CD4-positive, alpha-beta T cell (primary cell): ENCODE measurements at regions of chr1 and their contacts with region 1.

Region 1: DNA sequence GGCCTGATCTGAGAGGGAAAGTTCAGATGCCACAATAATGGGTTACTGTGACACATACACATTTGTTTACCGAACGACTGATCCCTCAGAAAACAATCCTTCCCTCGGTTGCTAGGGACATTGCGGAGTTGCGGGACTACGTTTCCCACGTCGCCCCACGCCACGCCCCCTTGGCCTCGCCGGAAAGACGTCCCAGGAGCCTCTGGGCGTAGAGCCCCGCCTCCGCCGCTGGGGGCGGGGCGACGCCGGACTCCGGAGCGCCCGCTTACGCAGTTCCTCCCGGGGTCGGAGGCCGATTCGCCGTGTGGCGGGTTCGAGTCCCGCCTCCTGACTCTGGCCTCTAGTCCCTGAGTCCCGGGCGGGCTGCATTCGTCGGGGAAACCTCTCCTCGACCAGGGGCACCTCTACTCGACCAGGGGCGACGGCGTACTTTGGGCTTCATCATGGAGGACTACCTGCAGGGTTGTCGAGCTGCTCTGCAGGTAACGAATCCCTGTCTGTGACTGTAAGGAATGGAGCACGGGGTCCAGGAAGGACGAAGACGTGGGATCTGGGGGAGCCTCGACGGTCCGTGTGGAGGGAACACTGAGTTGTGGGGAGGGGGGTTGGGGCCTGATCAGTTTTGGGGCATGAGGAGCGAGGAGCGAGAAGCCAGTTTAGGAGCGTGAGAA is at the start of gene PRUNE1:
- DNase-seq: peak; percentile 92 to 100 (median 96)
- ATAC-seq: peak; percentile 85
- H3K4me3 ChIP-seq: peak within 1 kb of the TSS; percentile 82
- H3K4me3 Mint-ChIP-seq: peak within 1 kb of the TSS; percentile 93
- H3K27ac ChIP-seq: peak within 1 kb of the TSS; percentile 87 to 98
- H3K27ac Mint-ChIP-seq: peak within 1 kb of the TSS; percentile 98
- H3K4me1 ChIP-seq: peaks cover 83% of the 10 kb centered on the region
- H3K4me1 Mint-ChIP-seq: peaks cover 86% of the 10 kb centered on the region
- H3K27me3 ChIP-seq: no peaks in the 10 kb centered on the region
- H3K27me3 Mint-ChIP-seq: no peaks in the 10 kb centered on the region
- CTCF ChIP-seq: no peak
- total RNA-seq, gene PRUNE1: 10.9 to 12.1 TPM

Region 2: DNA sequence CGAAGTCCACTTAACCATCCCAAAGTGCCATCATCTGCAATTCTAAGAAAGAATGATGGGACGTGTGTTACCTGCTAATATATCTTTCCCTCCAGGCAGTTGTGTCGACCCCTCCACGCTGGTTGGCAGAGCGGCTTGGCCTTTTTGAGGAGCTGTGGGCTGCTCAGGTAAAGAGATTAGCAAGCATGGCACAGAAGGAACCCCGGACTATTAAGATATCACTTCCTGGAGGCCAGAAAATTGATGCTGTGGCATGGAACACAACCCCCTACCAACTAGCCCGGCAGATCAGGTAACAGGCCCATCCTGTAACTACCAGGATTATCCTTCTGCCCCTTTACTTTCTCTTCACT is 520.6 kb before region 1 on chr1:
- CTCF ChIA-PET with region 1: no interaction called
- POLR2A ChIA-PET with region 1: no interaction called
- intact Hi-C with region 1: no loop called
- DNase-seq: peak in 2 of 14 experiments; percentile 1 to 6
- ATAC-seq: no peak
- H3K4me3 ChIP-seq: peak overlapping the region; percentile 67
- H3K4me3 Mint-ChIP-seq: peak overlapping the region; percentile 98
- H3K27ac ChIP-seq: peak overlapping the region; percentile 53 to 59
- H3K27ac Mint-ChIP-seq: peak overlapping the region; percentile 84
- H3K4me1 ChIP-seq: peaks cover 16% of the 10 kb centered on the region
- H3K4me1 Mint-ChIP-seq: peaks cover 20% of the 10 kb centered on the region
- H3K27me3 ChIP-seq: no peaks in the 10 kb centered on the region
- H3K27me3 Mint-ChIP-seq: no peaks in the 10 kb centered on the region
- CTCF ChIP-seq: no peak

Region 3: GRCh38 chr1:150876119-150876454 is 132.2 kb before region 1 on chr1:
- CTCF ChIA-PET with region 1: interaction called, 5 read pairs
- POLR2A ChIA-PET with region 1: no interaction called
- intact Hi-C with region 1: loop called in 1 of 2 experiments (anchors 5 kb)
- DNase-seq: no peak
- ATAC-seq: no peak
- H3K4me3 ChIP-seq: peak overlapping the region; percentile 79
- H3K4me3 Mint-ChIP-seq: peak overlapping the region; percentile 98
- H3K27ac ChIP-seq: peak overlapping the region; percentile 68 to 86
- H3K27ac Mint-ChIP-seq: peak overlapping the region; percentile 92
- H3K4me1 ChIP-seq: peaks cover 15% of the 10 kb centered on the region
- H3K4me1 Mint-ChIP-seq: peaks cover 43% of the 10 kb centered on the region
- H3K27me3 ChIP-seq: no peaks in the 10 kb centered on the region
- H3K27me3 Mint-ChIP-seq: no peaks in the 10 kb centered on the region
- CTCF ChIP-seq: no peak

Region 4: GRCh38 chr1:150979092-150980056 is 29.0 kb before region 1 on chr1:
- CTCF ChIA-PET with region 1: interaction called, 9 read pairs
- POLR2A ChIA-PET with region 1: interaction called, 11 read pairs
- intact Hi-C with region 1: loop called in 1 of 2 experiments (anchors 1 kb)
- DNase-seq: peak; percentile 81 to 94 (median 88)
- ATAC-seq: peak; percentile 55
- H3K4me3 ChIP-seq: peak overlapping the region; percentile 41
- H3K4me3 Mint-ChIP-seq: peak overlapping the region; percentile 75
- H3K27ac ChIP-seq: no peak overlapping the region
- H3K27ac Mint-ChIP-seq: peak overlapping the region; percentile 59
- H3K4me1 ChIP-seq: peaks cover 45% of the 10 kb centered on the region
- H3K4me1 Mint-ChIP-seq: peaks cover 40% of the 10 kb centered on the region
- H3K27me3 ChIP-seq: no peaks in the 10 kb centered on the region
- H3K27me3 Mint-ChIP-seq: no peaks in the 10 kb centered on the region
- CTCF ChIP-seq: peak; percentile 100

Region 5: GRCh38 chr1:150995896-150996295 is 12.4 kb before region 1 on chr1:
- CTCF ChIA-PET with region 1: interaction called, 29 read pairs
- POLR2A ChIA-PET with region 1: interaction called, 7 read pairs
- intact Hi-C with region 1: no loop called
- DNase-seq: peak in 6 of 14 experiments; percentile 15 to 65 (median 42)
- ATAC-seq: peak; percentile 60
- H3K4me3 ChIP-seq: no peak overlapping the region
- H3K4me3 Mint-ChIP-seq: no peak overlapping the region
- H3K27ac ChIP-seq: peak overlapping the region in 1 of 2 donors; percentile 26
- H3K27ac Mint-ChIP-seq: peak overlapping the region; percentile 65
- H3K4me1 ChIP-seq: peaks cover 27% of the 10 kb centered on the region
- H3K4me1 Mint-ChIP-seq: peaks cover 16% of the 10 kb centered on the region
- H3K27me3 ChIP-seq: no peaks in the 10 kb centered on the region
- H3K27me3 Mint-ChIP-seq: no peaks in the 10 kb centered on the region
- CTCF ChIP-seq: peak; percentile 96

Region 6: GRCh38 chr1:151047925-151048645 is 39.8 kb after region 1 on chr1:
- CTCF ChIA-PET with region 1: interaction called, 3 read pairs
- POLR2A ChIA-PET with region 1: interaction called, 18 read pairs
- intact Hi-C with region 1: no loop called
- DNase-seq: peak; percentile 28 to 84 (median 51)
- ATAC-seq: peak; percentile 77
- H3K4me3 ChIP-seq: peak overlapping the region; percentile 84
- H3K4me3 Mint-ChIP-seq: peak overlapping the region; percentile 93
- H3K27ac ChIP-seq: peak overlapping the region; percentile 65 to 73
- H3K27ac Mint-ChIP-seq: peak overlapping the region; percentile 90
- H3K4me1 ChIP-seq: peaks cover 55% of the 10 kb centered on the region
- H3K4me1 Mint-ChIP-seq: peaks cover 78% of the 10 kb centered on the region
- H3K27me3 ChIP-seq: no peaks in the 10 kb centered on the region
- H3K27me3 Mint-ChIP-seq: no peaks in the 10 kb centered on the region
- CTCF ChIP-seq: peak; percentile 52

Region 7: DNA sequence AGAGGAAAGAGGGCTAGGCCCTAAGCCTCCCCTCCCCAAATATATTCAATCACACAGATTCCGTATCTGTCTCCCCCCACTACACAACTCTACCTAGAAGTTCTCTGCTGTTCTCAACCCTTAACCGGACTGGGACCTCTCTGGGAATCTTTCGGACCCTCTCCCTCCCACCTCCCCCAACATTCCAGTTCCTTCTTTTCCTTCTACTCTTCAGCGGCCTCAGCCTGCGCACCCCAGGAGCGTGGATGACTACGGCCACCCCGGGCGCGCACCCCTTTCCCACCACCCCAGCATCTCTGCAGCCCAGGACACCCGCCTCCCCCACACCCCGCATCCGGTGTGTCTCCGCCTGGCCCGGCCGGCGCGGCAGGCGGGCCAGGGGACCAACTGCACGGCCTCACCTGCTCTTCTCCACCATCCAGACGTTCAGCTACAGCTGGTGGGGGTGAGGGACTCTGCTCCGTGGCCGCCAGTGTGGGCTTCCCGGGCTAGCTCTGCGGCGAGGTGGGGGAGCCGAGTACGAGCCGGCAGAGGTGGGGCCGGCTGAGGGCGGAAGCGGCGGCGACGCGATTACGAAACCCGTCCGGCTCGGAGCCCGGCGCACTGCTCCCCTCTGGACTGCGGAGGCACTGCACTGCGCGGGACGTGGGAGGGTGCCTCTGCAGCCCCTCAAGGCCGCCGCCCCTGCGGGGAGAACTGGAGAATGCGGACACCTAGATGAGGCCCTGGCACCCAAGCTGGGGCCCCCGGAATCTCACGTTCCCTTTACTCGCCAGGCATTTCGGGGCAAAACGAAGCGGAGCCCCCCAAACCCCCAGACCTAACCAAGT is 51.0 kb after region 1 on chr1 and contains the start of gene CDC42SE1:
- CTCF ChIA-PET with region 1: interaction called, 4 read pairs
- POLR2A ChIA-PET with region 1: interaction called, 13 read pairs
- intact Hi-C with region 1: loop called in 1 of 2 experiments (anchors 2 kb)
- DNase-seq: peak; percentile 71 to 94 (median 80)
- ATAC-seq: peak; percentile 76
- H3K4me3 ChIP-seq: peak within 1 kb of the TSS; percentile 64
- H3K4me3 Mint-ChIP-seq: peak within 1 kb of the TSS; percentile 97
- H3K27ac ChIP-seq: peak within 1 kb of the TSS; percentile 88 to 93
- H3K27ac Mint-ChIP-seq: peak within 1 kb of the TSS; percentile 90
- H3K4me1 ChIP-seq: peaks cover 42% of the 10 kb centered on the region
- H3K4me1 Mint-ChIP-seq: peaks cover 56% of the 10 kb centered on the region
- H3K27me3 ChIP-seq: no peaks in the 10 kb centered on the region
- H3K27me3 Mint-ChIP-seq: no peaks in the 10 kb centered on the region
- CTCF ChIP-seq: peak; percentile 81
- total RNA-seq, gene CDC42SE1: 401 to 404 TPM

Region 8: GRCh38 chr1:151070474-151071276 is 62.4 kb after region 1 on chr1 and contains the start of gene GABPB2:
- CTCF ChIA-PET with region 1: interaction called, 13 read pairs
- POLR2A ChIA-PET with region 1: interaction called, 5 read pairs
- intact Hi-C with region 1: no loop called
- DNase-seq: peak; percentile 77 to 95 (median 82)
- ATAC-seq: peak; percentile 80
- H3K4me3 ChIP-seq: peak within 1 kb of the TSS; percentile 87
- H3K4me3 Mint-ChIP-seq: peak within 1 kb of the TSS; percentile 99
- H3K27ac ChIP-seq: peak within 1 kb of the TSS; percentile 94 to 98
- H3K27ac Mint-ChIP-seq: peak within 1 kb of the TSS; percentile 98
- H3K4me1 ChIP-seq: peaks cover 31% of the 10 kb centered on the region
- H3K4me1 Mint-ChIP-seq: peaks cover 27% of the 10 kb centered on the region
- H3K27me3 ChIP-seq: no peaks in the 10 kb centered on the region
- H3K27me3 Mint-ChIP-seq: no peaks in the 10 kb centered on the region
- CTCF ChIP-seq: peak; percentile 93
- total RNA-seq, gene GABPB2: 23.7 to 25.5 TPM

Region 9: DNA sequence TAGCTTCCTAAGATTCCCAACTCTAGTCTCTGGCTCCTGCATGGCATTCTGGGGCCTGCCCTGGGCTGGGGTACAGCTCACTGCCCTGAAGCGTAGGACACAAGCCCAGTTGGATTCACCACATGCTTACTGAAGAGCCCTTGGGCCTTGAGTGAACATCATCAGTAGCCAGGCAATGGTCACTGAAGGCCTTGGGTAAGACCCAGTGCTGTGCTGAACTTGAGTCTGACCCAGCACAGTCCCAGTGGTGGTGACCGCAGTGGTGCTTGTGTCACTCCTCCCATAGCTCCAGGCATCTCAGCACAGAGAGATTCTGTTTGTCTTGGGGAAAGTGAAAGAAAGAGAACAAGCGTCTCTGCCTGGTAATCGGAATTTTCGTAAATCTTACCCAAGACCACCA is 1622.3 kb after region 1 on chr1:
- CTCF ChIA-PET with region 1: no interaction called
- POLR2A ChIA-PET with region 1: no interaction called
- intact Hi-C with region 1: no loop called
- DNase-seq: no peak
- ATAC-seq: no peak
- H3K4me3 ChIP-seq: no peak overlapping the region
- H3K4me3 Mint-ChIP-seq: no peak overlapping the region
- H3K27ac ChIP-seq: no peak overlapping the region
- H3K27ac Mint-ChIP-seq: no peak overlapping the region
- H3K4me1 ChIP-seq: no peaks in the 10 kb centered on the region
- H3K4me1 Mint-ChIP-seq: no peaks in the 10 kb centered on the region
- H3K27me3 ChIP-seq: peaks cover 16 to 23% of the 10 kb centered on the region in 2 experiments
- H3K27me3 Mint-ChIP-seq: peaks cover 41% of the 10 kb centered on the region
- CTCF ChIP-seq: no peak